ENCODE measurements at regions of chr9 and their contacts with region 1.

Region 1: GRCh38 chr9:128304975-128305343 is 17.3 kb downstream of the TRUB2 start:
- DNase-seq: no peak
- ATAC-seq: no peak
- H3K4me3 ChIP-seq: no peak overlapping the region
- H3K4me3 Mint-ChIP-seq: no peak overlapping the region
- H3K27ac ChIP-seq: no peak overlapping the region
- H3K27ac Mint-ChIP-seq: no peak overlapping the region
- H3K4me1 ChIP-seq: no peaks in the 10 kb centered on the region
- H3K4me1 Mint-ChIP-seq: no peaks in the 10 kb centered on the region
- H3K27me3 ChIP-seq: no peaks in the 10 kb centered on the region
- H3K27me3 Mint-ChIP-seq: no peaks in the 10 kb centered on the region

Region 2: GRCh38 chr9:128271108-128271507 is 33.9 kb before region 1 on chr9:
- CTCF ChIA-PET with region 1: no interaction called
- POLR2A ChIA-PET with region 1: interaction called, 3 to 10 read pairs
- DNase-seq: no peak
- ATAC-seq: no peak
- H3K4me3 ChIP-seq: no peak overlapping the region
- H3K4me3 Mint-ChIP-seq: no peak overlapping the region
- H3K27ac ChIP-seq: no peak overlapping the region
- H3K27ac Mint-ChIP-seq: no peak overlapping the region
- H3K4me1 ChIP-seq: peaks cover 3 to 12% of the 10 kb centered on the region in 2 experiments
- H3K4me1 Mint-ChIP-seq: peaks cover 9 to 22% (median 22%) of the 10 kb centered on the region in 3 donors
- H3K27me3 ChIP-seq: no peaks in the 10 kb centered on the region
- H3K27me3 Mint-ChIP-seq: no peaks in the 10 kb centered on the region